PC-9 (cell line): ENCODE measurements at regions of chr2 and their contacts with region 1.

Region 1: DNA sequence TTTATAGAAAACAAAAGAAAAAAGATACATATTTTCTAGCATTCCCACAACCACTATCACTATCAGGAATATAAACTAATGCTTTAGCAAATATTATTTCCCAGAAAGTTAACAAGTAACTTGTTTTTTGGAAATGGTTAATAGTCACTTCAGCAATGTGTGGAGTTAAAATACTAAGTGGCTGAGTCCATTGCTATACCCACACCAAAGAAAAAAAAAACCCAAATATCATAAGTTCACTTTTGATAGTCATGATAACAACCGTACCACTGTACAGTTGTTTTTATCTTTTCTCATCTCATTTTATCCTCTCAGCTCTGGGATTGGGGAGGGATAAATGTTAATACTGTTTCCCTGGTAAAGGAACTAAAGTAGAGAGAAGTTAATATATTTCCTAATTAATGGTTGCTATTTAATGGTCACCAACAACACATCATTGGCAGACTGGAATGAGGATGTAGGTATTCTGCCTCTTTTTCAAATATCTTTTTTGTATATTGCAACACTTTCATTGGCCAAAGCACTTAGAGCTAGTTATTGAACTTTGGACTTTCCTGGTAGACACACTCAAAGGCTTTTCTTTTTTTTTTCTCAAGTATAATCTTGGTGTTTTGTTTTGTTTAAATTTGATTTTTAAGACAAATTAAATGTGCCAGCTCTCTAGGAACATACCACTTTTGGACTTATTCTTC is 18.4 kb upstream of the KANSL1L start:
- DNase-seq: no peak
- H3K4me3 ChIP-seq: no peak overlapping the region
- H3K27ac ChIP-seq: no peak overlapping the region
- H3K4me1 ChIP-seq: no peaks in the 10 kb centered on the region
- H3K27me3 ChIP-seq: no peaks in the 10 kb centered on the region
- CTCF ChIP-seq: no peak

Region 2: DNA sequence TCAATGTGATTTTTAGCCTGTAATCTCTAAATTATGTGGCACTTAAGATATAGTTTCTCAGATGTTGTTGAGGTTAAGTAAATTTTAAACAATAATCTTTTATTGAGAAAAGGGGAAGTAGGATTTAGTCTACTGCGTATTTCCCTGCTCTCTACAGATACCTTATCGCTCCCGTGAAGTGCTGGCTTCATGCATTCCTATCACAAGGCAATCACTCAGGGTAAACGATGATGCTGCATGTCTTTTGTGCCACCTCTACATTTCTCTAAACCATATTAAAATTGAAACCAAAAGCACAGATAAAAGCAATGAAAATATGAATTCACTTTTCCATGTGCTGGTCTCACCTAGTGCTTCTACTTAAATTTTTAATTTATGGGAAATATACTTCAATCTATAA is 201.6 kb before region 1 on chr2:
- CTCF ChIA-PET with region 1: no interaction called
- POLR2A ChIA-PET with region 1: interaction called, 17 read pairs
- intact Hi-C with region 1: no loop called
- DNase-seq: no peak
- H3K4me3 ChIP-seq: no peak overlapping the region
- H3K27ac ChIP-seq: no peak overlapping the region
- H3K4me1 ChIP-seq: no peaks in the 10 kb centered on the region
- H3K27me3 ChIP-seq: no peaks in the 10 kb centered on the region
- CTCF ChIP-seq: no peak

Region 3: GRCh38 chr2:210171309-210172203 is 18.0 kb before region 1 on chr2 and contains the start of gene KANSL1L:
- CTCF ChIA-PET with region 1: no interaction called
- POLR2A ChIA-PET with region 1: no interaction called
- intact Hi-C with region 1: no loop called
- DNase-seq: peak; percentile 75 to 94
- H3K4me3 ChIP-seq: peak within 1 kb of the TSS; percentile 83
- H3K27ac ChIP-seq: peak within 1 kb of the TSS; percentile 91
- H3K4me1 ChIP-seq: peaks cover 17% of the 10 kb centered on the region
- H3K27me3 ChIP-seq: no peaks in the 10 kb centered on the region
- CTCF ChIP-seq: no peak
- total RNA-seq, gene KANSL1L: 8.6 and 8.8 TPM in 2 replicates